ENCODE measurements at regions of chr9 and their contacts with region 1.

Region 1: GRCh38 chr9:127899128-127899946 is at the start of gene ST6GALNAC6:
- DNase-seq: peak; percentile 79
- H3K4me3 Mint-ChIP-seq: peak within 1 kb of the TSS; percentile 85
- H3K27ac Mint-ChIP-seq: peak within 1 kb of the TSS; percentile 82
- H3K4me1 Mint-ChIP-seq: peaks cover 32% of the 10 kb centered on the region
- H3K27me3 Mint-ChIP-seq: no peaks in the 10 kb centered on the region
- total RNA-seq, gene ST6GALNAC6: 50.1 to 53.8 TPM

Region 2: DNA sequence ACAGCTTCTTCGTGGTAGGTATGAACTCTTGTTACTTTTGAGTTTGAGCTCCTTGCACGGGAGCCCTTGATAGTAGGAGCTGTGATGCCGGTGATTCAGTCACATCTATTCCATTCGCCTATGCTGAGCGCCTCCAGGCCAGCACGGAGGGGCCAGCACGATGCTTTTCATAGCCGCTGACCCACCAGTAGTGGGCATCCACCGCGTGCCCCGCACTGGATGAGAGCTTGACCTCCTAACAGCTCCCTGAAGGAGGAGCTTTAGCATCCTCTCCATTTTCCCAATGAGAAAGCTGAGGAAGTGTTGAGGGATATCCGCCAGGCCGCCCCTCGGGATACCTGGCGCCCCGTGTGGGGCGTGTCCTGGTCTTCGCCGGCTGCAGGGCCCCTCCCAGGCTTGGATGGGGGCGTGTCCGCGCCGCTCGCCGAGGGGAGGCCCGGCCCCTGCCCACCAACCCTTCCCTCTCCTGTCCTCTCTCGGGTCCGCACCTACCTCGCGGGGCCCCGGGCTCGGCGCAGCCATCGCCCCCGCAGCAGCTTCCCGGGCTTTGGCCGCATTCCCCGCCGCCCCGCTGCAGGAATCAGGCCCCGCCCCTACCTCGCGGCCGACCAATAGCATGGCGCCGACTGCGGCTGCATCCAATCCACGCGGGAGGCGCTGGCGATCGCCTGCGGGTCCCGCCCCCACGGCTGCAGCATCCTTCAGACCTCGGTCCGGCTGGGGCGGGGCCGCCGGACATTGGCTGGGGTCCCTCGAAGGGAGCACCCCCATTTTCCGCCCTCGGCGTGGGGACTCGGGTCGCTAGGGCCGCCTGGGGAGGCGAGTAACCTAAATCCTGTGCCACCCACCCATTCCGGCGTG is 31.1 kb after region 1 on chr9 and contains the start of gene PIP5KL1:
- CTCF ChIA-PET with region 1: interaction called, 11 read pairs
- POLR2A ChIA-PET with region 1: interaction called, 3 read pairs
- intact Hi-C with region 1: no loop called
- DNase-seq: peak; percentile 79
- H3K4me3 Mint-ChIP-seq: peak within 1 kb of the TSS; percentile 48
- H3K27ac Mint-ChIP-seq: no peak within 1 kb of the TSS
- H3K4me1 Mint-ChIP-seq: peaks cover 32% of the 10 kb centered on the region
- H3K27me3 Mint-ChIP-seq: peaks cover 1% of the 10 kb centered on the region
- total RNA-seq, gene PIP5KL1: 0.94 to 2.9 TPM

Measured in activated CD4-positive, alpha-beta memory T cell treated with anti-CD3 and anti-CD28 coated beads for 36 hours (primary cell).